ENCODE measurements at regions of chr11 and their contacts with region 1.

Region 1: DNA sequence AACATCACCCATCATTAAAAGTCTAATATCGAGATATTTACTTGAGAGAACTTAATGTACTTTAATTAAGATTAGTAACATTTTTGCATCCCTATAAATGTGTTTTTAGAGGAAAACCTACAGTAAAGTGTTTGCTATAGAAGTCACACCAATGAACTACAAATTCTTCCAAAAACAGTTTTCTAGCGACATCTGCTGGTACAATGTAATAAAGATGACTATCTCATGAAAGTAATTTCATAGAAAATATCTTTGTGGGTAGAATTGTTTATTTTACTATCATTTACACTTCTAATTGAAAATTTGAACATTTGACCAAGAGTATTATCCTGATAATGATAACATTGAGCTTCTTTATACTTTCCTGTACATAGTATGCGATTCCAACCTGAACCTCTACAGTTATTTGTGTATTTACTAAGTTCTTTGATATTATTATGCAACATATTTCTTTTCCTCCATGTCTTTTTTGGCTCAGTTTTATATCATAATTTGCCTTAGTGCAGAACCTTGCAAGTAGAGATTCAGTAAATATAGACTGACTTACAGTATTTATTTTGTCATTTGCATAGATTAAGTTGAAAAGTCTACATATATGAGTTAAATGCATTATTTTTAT is 252.7 kb downstream of the TMEM135 start:
- ATAC-seq: peak in 3 of 8 experiments; percentile 25 to 54 (median 42)
- H3K4me3 ChIP-seq: no peak overlapping the region
- H3K27ac ChIP-seq: no peak overlapping the region
- H3K4me1 ChIP-seq: no peaks in the 10 kb centered on the region

Region 2: GRCh38 chr11:86938900-86939880 is 351.2 kb before region 1 on chr11:
- in situ Hi-C with region 1: loop called in 5 of 9 experiments (anchors 10 to 25 kb)
- ATAC-seq: peak in 7 of 8 experiments; percentile 11 to 49 (median 46)
- H3K4me3 ChIP-seq: no peak overlapping the region
- H3K27ac ChIP-seq: no peak overlapping the region
- H3K4me1 ChIP-seq: peaks cover 3 to 20% of the 10 kb centered on the region in 2 donors

Region 3: DNA sequence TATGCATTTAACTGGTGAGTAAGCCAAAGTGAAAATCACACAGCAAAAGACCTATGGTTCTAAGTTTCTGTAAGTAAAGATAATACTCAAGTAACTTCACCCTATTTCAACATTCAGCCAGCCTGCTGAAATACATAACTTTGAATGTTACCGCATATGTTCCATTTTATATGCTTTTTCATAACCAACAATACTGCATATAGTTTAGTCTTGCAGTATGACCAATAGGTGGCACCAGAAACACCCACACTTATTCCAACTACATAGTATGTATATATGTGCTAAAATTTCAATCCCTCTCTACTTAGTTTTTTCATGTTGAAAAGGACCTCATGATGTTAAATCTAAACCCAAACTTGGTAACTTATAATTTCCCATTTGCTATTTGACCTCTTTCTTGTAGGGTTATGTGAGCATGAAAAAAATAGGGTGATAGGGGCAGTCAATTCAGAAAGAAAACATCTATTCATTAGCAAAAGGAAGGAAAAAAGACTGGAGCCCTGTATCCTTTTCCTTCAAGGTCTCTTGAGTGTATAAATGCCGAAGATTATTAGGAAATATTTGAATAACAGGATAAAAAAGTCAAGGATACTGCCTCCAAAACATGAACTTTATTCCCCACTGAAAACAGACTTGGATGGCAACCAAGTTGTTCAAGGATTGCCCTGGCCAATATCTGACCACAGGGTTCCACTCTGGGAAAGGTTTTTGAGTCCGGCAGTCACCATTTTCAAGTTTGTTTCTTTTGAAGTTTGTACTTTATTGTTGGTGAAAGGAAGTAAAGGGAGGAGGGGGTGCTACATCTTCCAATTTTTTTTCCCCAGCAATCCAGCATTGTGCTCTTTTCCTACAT is 311.4 kb before region 1 on chr11:
- in situ Hi-C with region 1: loop called in 1 of 9 experiments (anchors 25 kb)
- ATAC-seq: peak in 3 of 8 experiments; percentile 70 to 93 (median 74)
- H3K4me3 ChIP-seq: no peak overlapping the region
- H3K27ac ChIP-seq: no peak overlapping the region
- H3K4me1 ChIP-seq: no peaks in the 10 kb centered on the region